ENCODE measurements at regions of chr12 and their contacts with region 1.

Region 1: DNA sequence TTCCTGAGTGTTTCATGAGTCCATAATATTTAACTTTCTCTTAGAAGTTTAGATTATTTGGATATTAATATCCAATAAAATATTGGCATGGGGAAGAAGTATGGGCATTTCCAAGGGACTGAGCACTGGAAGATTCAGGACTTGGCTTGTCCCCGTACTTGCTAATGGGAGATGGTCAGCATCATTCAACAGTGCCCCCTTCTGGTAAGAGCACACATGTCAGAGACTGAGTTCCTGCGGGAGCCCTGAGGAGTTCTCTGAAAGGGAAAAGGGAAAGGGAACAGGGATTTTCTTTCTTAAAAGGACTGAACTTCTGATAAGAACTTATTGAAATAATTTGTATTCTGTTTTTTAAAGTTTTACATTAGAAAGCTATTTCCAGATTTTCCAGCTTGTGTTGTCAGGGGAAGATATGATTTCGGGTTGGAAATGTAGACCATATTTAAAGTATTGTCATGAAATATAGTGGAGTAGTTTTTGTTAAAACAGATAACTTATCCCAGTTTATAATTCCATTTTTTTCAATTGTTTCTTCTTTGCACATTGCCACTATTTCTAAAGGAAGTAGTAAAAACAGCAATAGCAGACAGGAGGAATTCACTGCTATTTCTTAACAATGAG is 59.8 kb upstream of the C12orf71 start:
- DNase-seq: peak; percentile 63
- ATAC-seq: peak; percentile 70
- H3K4me3 Mint-ChIP-seq: no peak overlapping the region
- H3K27ac Mint-ChIP-seq: no peak overlapping the region
- H3K4me1 Mint-ChIP-seq: peaks cover 12% of the 10 kb centered on the region
- H3K27me3 Mint-ChIP-seq: no peaks in the 10 kb centered on the region

Region 2: DNA sequence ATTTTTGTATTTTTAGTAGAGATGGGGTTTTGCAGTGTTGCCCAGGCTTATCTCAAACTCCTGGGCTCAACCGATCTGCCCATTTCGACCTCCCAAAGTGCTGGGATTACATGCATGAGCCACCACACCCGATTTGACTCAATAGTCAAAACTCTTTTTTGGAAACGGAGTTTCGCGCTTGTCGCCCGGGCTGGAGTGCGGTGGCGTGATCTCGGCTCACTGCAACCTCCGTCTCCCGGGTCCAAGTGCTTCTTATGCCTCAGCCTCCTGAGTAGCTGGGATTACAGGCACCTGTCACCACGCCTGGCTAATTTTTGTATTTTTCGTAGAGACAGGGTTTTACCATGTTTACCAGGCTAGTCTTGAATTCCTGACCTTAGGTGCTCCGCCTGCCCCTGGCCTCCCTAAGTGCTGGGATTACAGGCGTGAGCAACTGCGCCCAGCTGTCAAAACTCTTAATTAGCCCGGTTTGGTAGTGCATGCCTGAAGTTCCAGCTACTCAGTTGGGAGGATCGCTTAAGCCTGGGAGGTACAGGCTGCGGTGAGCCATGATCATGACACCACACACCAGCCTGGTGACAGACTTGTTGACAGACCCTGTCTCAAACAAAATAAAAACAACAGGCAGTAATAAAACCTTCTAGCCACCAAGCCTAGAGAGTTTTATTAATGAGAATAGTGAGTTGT is 107.5 kb before region 1 on chr12:
- CTCF ChIA-PET with region 1: interaction called, 3 read pairs
- POLR2A ChIA-PET with region 1: no interaction called
- intact Hi-C with region 1: loop called in 1 of 2 experiments (anchors 1 kb)
- DNase-seq: no peak
- ATAC-seq: no peak
- H3K4me3 Mint-ChIP-seq: no peak overlapping the region
- H3K27ac Mint-ChIP-seq: no peak overlapping the region
- H3K4me1 Mint-ChIP-seq: no peaks in the 10 kb centered on the region
- H3K27me3 Mint-ChIP-seq: no peaks in the 10 kb centered on the region

Region 3: DNA sequence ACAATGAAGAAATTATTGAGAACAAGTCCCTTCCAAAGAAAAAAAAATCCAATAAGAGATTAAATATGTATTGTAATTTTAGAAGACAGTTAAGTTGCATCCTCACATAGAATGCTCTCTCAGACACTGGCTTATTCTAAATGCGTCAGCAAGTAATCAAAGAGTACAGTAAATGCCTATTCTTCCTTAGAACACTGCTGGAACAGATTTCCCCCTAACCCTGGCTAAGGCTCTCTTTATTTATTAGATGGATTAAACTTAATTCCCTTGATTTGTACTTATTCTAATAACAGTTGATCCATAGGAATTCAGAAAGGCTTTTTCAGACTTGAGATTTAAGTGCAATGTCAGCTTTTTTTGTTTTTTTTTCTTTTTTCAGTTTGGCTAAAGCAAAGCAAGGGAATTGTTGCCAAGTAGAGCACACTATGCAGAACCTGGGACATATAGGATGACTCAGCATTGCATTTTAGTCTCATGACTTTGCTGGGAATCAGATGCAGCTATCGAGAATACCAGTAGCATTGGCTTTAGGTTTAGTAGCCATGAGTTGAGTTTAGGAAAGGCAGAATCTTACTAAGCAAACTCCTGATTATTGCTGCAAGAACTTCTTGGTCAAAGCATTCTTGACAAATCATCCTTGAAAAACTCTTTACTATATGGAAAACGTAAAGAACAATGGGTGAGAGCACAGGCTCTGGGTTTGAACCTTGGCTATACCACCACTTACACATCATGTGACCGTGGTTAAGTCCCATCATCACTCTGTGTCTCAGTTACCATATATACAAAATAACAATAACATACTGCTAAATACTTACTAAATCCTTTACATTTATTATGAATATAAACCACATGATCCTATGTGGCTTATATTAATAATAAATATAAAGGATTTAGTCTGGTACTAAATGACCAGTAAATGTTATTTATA is 93.1 kb before region 1 on chr12:
- CTCF ChIA-PET with region 1: no interaction called
- POLR2A ChIA-PET with region 1: no interaction called
- intact Hi-C with region 1: loop called in 1 of 2 experiments (anchors 5 kb)
- DNase-seq: no peak
- ATAC-seq: no peak
- H3K4me3 Mint-ChIP-seq: no peak overlapping the region
- H3K27ac Mint-ChIP-seq: no peak overlapping the region
- H3K4me1 Mint-ChIP-seq: no peaks in the 10 kb centered on the region
- H3K27me3 Mint-ChIP-seq: no peaks in the 10 kb centered on the region

Measured in activated CD4-positive, alpha-beta T cell treated with anti-CD3 and anti-CD28 coated beads for 36 hours (primary cell).